Motor neuron (in vitro differentiated cells): ENCODE measurements at regions of chr2 and their contacts with region 1.

Region 1: GRCh38 chr2:223993621-223994232 is 36.5 kb downstream of the MRPL44 start:
- ATAC-seq: peak; percentile 62 to 93 (median 83)
- H3K4me3 ChIP-seq: no peak overlapping the region
- H3K27ac ChIP-seq: no peak overlapping the region
- H3K4me1 ChIP-seq: peaks cover 2 to 13% of the 10 kb centered on the region in 2 donors

Region 2: DNA sequence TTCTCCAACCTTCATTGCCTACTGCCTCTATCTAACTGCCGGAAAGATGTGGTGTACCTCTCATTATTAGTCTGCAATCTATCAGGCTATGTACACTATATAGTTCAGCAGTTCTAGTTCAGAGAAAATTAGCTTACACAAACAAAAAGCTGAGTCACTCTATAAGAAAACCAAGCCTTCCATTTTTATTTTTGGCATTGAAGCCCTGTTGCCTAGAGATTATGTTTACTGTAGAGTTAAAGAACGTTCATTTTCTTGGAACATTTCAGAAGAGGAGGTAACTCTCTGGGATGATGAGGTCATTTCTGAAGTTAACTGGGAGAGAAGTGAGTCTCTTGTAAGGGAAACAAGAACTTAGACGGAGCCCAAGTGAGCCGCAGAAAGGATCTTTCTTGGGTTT is 274.7 kb after region 1 on chr2:
- in situ Hi-C with region 1: loop called in 2 of 9 experiments (anchors 25 kb)
- ATAC-seq: peak; percentile 73 to 98 (median 88)
- H3K4me3 ChIP-seq: no peak overlapping the region
- H3K27ac ChIP-seq: no peak overlapping the region
- H3K4me1 ChIP-seq: no peaks in the 10 kb centered on the region

Region 3: GRCh38 chr2:224284134-224284946 is 290.6 kb after region 1 on chr2:
- in situ Hi-C with region 1: loop called in 7 of 9 experiments (anchors 10 to 25 kb)
- ATAC-seq: peak in 6 of 8 experiments; percentile 19 to 53 (median 34)
- H3K4me3 ChIP-seq: no peak overlapping the region
- H3K27ac ChIP-seq: no peak overlapping the region
- H3K4me1 ChIP-seq: no peaks in the 10 kb centered on the region